Sigmoid colon (tissue), 7 donors: ENCODE measurements at regions of chr15 and their contacts with region 1.

Region 1: GRCh38 chr15:40344631-40345120 is 3.9 kb upstream of the CCDC9B start:
- DNase-seq: peak; percentile 83
- H3K4me3 ChIP-seq: no peak overlapping the region
- H3K27ac ChIP-seq: peak overlapping the region in 2 of 4 donors; percentile 99
- H3K4me1 ChIP-seq: peaks cover 0 to 54% (median 52%) of the 10 kb centered on the region in 4 donors
- H3K27me3 ChIP-seq: no peaks in the 10 kb centered on the region
- CTCF ChIP-seq: peak; percentile 66 to 91 (median 80)
- EP300 ChIP-seq: no peak
- POLR2A ChIP-seq: no peak

Region 2: GRCh38 chr15:40367686-40368611 is 23.3 kb after region 1 on chr15:
- intact Hi-C with region 1: loop called (anchors 1 kb)
- DNase-seq: peak; percentile 92
- H3K4me3 ChIP-seq: peak overlapping the region in 3 of 4 donors; percentile 34 to 48 (median 41)
- H3K27ac ChIP-seq: peak overlapping the region; percentile 25 to 82 (median 74)
- H3K4me1 ChIP-seq: peaks cover 0 to 23% (median 21%) of the 10 kb centered on the region in 4 donors
- H3K27me3 ChIP-seq: no peaks in the 10 kb centered on the region
- CTCF ChIP-seq: peak; percentile 70 to 80 (median 76)
- EP300 ChIP-seq: no peak
- POLR2A ChIP-seq: no peak

Region 3: GRCh38 chr15:40405501-40406381 is 61.1 kb after region 1 on chr15 and contains the start of gene IVD:
- intact Hi-C with region 1: loop called (anchors 2 kb)
- DNase-seq: peak; percentile 98
- H3K4me3 ChIP-seq: peak within 1 kb of the TSS; percentile 67 to 92 (median 86)
- H3K27ac ChIP-seq: peak within 1 kb of the TSS; percentile 77 to 83 (median 80)
- H3K4me1 ChIP-seq: peaks cover 0 to 31% (median 22%) of the 10 kb centered on the region in 4 donors
- H3K27me3 ChIP-seq: no peaks in the 10 kb centered on the region
- CTCF ChIP-seq: no peak
- EP300 ChIP-seq: no peak
- POLR2A ChIP-seq: peak; percentile 23 to 59
- total RNA-seq, gene IVD: 33.2 to 59.9 (median 55.4) TPM

Region 4: DNA sequence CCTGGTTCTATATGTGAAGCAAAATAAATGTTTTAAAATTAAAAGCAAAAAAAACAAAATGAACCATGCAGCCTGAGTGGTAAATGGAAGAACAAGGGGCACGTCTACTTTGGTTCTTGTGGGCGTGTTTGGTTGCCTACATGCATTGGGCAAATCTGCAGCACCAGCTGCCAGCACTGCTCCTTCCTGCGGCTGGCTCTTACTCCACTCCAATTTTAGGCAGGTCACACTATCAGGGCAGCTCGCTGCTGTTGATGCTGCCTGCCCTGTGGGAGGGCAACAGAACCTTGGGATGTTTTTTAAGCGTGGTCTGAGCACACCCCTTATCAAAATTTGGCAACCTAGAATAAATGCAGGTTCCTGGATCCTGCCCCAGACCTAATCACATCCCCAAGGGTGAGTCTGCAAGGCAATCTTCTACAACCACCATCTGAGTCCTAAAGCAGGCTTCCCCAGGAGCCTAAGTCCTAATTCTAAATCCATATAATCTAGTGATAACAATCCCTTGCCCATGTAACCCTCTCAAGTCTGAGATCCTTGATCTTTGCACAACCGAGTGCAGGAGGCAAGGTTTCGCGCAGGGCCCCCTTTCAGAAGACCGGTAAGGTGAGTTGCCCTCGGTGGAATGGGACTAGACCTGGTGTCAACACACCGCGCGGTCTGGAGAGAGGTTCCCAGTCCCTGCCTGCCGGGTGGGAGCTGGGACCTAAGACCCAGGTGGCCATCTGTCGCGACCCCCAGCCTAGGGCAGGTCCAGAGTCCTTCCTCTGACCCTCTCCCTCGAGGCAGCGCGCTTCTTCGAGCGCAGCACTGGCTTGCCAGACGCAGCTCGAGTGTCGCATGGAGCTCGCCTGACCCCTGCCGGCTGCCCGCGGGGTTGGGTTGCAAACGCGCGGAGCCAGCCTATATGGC is 76.8 kb after region 1 on chr15:
- intact Hi-C with region 1: loop called (anchors 2 kb)
- DNase-seq: peak; percentile 85
- H3K4me3 ChIP-seq: no peak overlapping the region
- H3K27ac ChIP-seq: no peak overlapping the region
- H3K4me1 ChIP-seq: peaks cover 0 to 17% (median 10%) of the 10 kb centered on the region in 4 donors
- H3K27me3 ChIP-seq: no peaks in the 10 kb centered on the region
- CTCF ChIP-seq: peak; percentile 91 to 94 (median 92)
- EP300 ChIP-seq: no peak
- POLR2A ChIP-seq: no peak

Region 5: GRCh38 chr15:40598126-40598525 is 253.4 kb after region 1 on chr15:
- intact Hi-C with region 1: no loop called
- DNase-seq: no peak
- H3K4me3 ChIP-seq: no peak overlapping the region
- H3K27ac ChIP-seq: no peak overlapping the region
- H3K4me1 ChIP-seq: peaks cover 0 to 12% (median 9%) of the 10 kb centered on the region in 4 donors
- H3K27me3 ChIP-seq: peaks cover 0 to 29% (median 6%) of the 10 kb centered on the region in 3 donors
- CTCF ChIP-seq: no peak
- EP300 ChIP-seq: no peak
- POLR2A ChIP-seq: no peak